Activated T-helper 2 cell treated with anti-CD3 and anti-CD28 coated beads, Interferon-gamma antibody, Interleukin-2, Interleukin-4, amounts not matched to agents 10 μg/mL and 5 μg/mL and 100 μg/mL, durations not matched to agents 14 hours and 24 hours and 36 hours (primary cell): ENCODE measurements at regions of chr9 and their contacts with region 1.

Region 1: DNA sequence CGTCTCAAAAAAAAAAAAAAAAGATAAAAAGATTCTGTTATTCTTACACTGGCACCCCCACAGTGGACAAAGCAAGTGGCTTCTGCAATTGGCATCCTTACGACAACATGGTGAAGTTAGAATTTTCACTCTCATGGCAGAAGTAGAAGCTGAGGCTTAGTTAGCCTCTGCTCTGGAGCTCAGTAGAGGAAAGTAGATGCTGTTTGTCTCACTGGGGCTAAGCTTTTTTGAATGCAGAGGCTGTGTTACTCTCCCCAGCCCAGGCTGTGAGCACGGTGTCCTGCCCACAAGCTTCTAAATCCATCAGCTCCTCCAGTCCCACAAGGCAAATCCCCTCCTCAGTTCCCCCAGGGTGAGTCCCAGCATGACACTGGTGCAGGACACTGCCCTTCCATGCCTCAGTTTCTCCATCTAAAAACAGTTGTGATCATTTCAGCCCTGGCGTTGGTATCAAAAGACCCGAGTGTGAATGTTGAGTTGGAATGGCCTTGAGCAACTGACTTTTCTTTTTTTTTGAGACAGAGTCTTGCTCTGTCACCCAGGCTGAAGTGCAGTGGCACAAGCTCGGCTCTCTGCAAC is 22.6 kb upstream of the PHF19 start:
- DNase-seq: no peak
- H3K4me3 Mint-ChIP-seq: no peak overlapping the region
- H3K27ac Mint-ChIP-seq: peak overlapping the region; percentile 82
- H3K4me1 Mint-ChIP-seq: peaks cover 72% of the 10 kb centered on the region
- H3K27me3 Mint-ChIP-seq: no peaks in the 10 kb centered on the region

Region 2: DNA sequence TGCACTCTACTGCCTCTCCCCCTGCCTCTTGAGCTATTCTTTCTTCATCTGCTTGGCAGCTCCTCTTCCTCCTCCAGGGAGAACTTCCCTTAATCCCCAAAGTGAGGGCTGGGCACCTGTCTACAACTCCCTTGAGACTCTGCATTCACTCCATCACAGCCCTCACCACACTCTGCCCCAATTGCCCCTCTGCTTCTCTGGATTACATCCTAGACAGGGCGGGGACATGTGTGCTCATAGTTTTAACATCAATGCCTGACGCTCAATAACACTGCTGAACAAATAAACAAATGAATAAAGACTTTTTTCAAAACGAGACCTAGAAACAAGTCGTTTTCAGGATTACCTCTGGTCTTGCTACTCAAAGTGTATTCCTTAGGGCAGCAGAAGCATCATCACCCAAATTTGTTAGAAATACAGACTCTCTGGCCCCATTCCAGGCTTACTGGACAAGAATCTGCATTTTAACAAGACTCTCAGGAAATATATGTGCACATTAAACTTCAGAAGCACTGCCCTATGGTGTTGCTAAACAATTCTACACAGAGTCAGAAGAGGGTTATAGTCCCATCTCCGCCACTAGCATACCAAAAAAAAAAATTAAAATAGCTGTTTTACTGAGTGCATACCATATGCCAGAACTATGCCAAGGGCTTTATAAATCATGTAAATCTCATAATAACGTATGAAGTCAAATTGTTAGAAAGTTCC is 435.2 kb before region 1 on chr9:
- intact Hi-C with region 1: no loop called
- DNase-seq: no peak
- H3K4me3 Mint-ChIP-seq: no peak overlapping the region
- H3K27ac Mint-ChIP-seq: no peak overlapping the region
- H3K4me1 Mint-ChIP-seq: no peaks in the 10 kb centered on the region
- H3K27me3 Mint-ChIP-seq: no peaks in the 10 kb centered on the region

Region 3: DNA sequence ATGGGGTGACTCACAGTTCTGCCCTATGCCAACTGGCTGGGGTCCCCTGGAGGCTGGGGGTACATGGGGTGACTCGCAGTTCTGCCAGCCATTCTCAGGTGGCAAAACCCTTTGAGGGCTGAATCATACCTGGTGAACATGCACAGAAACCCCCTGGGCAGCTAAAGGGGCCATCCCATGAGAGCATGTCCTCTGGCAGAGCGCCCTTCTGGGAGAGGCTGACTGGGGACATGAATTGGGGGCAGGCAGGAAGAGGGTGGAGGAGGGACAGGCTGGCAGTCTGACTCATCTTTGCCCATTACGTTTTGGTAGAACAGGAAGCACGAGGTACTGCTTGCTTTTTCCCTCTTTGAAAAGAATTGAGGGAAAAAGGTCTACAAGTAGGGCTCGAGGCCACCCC is 10.3 kb after region 1 on chr9:
- intact Hi-C with region 1: loop called (anchors 1 kb)
- DNase-seq: no peak
- H3K4me3 Mint-ChIP-seq: no peak overlapping the region
- H3K27ac Mint-ChIP-seq: peak overlapping the region; percentile 82
- H3K4me1 Mint-ChIP-seq: peaks cover 83% of the 10 kb centered on the region
- H3K27me3 Mint-ChIP-seq: no peaks in the 10 kb centered on the region

Region 4: GRCh38 chr9:120944434-120944843 is 44.9 kb after region 1 on chr9:
- intact Hi-C with region 1: no loop called
- DNase-seq: no peak
- H3K4me3 Mint-ChIP-seq: no peak overlapping the region
- H3K27ac Mint-ChIP-seq: no peak overlapping the region
- H3K4me1 Mint-ChIP-seq: no peaks in the 10 kb centered on the region
- H3K27me3 Mint-ChIP-seq: peaks cover 5% of the 10 kb centered on the region